ENCODE measurements at regions of chr9 and their contacts with region 1.

Region 1: DNA sequence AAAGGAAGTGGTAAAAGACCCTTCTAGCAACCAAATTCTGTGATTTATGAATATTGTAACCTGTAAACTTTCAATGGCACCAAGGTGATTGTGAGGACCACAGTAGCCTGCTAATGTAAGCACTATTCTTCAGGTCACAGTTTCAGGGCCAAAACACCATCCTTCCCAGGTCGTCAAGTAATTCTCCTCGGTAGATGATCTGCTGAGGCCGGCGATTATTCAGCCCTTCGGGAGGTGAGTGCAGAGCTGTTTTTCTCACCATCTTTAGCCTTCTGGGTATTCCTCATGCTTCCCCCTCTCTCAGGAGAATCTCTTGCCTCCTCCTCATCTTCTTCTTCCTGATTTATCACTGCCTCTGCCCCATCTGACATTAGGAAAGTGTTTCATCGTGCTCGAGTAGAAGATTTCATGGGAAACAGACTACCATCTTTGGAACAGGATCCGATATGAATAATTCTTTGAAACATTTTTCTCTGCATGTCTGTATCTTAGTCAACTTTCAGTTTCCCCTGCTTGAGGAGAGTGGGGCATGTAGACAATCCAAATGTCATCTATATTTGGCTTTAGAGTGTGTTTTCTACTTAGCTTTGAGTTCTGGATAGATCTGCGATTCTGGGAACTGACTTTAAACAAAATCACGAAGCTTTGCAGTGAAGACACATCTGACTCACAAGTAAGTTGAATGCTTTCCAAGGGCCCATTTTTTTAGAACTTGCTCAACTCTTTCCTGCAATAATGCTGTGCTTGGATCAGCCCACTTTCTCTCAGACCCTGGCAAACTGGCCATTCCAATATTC is 173.9 kb downstream of the AOPEP start:
- DNase-seq: peak in 1 of 2 donors; percentile 73
- H3K4me3 ChIP-seq: peak overlapping the region; percentile 28 to 45
- H3K27ac ChIP-seq: peak overlapping the region; percentile 84 to 90
- H3K4me1 ChIP-seq: peaks cover 9 to 44% of the 10 kb centered on the region in 2 donors
- H3K27me3 ChIP-seq: no peaks in the 10 kb centered on the region
- CTCF ChIP-seq: no peak

Region 2: DNA sequence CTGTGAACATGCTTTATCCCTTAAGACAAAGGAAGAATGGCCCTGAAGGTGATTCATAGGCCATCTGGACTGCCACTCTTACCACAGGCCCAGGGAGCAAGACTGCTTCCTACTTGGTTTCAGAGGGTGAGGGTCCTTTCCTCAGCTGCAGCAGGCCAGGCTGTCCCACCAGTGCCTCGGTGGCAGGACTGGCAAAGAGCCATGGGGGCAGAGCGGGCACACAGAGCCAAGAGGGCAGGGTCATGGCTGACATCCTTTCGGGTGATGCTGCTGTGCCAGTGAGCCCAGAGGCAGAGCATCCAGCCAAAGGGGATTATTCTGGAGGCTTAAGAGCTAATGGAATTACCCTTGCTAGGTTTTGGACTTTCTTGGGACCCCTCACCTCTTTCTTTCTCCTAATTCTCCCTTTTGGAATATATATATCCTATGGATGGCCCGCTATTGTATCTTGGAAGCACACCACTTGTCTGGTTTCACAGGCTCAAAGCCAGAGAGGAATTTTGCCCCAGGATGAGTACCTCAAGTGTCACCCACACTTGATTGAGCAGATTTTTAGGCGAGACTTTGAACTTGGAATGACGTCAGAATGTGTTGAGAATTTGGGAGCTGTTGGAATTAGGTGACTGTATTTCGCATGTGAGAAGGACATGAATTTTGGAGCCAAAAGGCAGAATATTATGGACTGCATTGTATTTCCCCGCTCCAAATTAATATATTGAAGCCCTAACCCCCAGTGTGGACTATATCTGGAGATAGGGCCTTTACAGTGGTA is 1125.9 kb before region 1 on chr9:
- intact Hi-C with region 1: no loop called
- DNase-seq: no peak
- H3K4me3 ChIP-seq: no peak overlapping the region
- H3K27ac ChIP-seq: no peak overlapping the region
- H3K4me1 ChIP-seq: no peaks in the 10 kb centered on the region
- H3K27me3 ChIP-seq: no peaks in the 10 kb centered on the region
- CTCF ChIP-seq: no peak

Region 3: DNA sequence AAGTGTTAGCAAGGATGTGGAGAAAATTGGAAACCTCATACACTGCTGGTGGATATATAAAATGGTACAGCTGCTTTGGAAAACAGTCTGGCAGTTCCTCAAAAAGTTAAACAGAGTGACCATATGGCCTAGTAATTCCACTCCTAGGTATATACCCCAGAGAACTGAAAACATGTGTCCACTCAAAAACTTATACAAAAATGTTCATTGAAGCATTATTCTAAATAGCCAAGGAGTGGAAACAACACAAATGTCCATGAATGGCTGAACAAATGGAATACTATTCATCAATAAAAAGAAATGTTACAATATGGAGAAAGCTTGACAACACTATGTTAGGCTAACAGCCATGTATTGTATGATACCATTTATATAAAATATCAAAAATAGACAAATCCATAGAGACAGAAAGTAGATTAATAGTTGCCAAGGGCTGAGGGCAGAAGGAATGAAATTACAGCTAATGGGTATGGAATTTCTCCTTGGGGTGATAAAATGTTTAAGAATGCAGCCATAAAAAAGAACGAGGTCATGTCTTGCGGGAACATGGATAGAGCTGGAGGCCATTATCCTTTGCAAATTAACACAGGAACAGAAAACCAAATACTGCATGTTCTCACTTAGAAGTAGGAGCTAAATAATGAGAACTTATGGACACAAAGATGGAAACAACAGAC is 227.5 kb before region 1 on chr9:
- intact Hi-C with region 1: loop called (anchors 10 kb)
- DNase-seq: no peak
- H3K4me3 ChIP-seq: no peak overlapping the region
- H3K27ac ChIP-seq: peak overlapping the region; percentile 5 to 9
- H3K4me1 ChIP-seq: peaks cover 7 to 17% of the 10 kb centered on the region in 2 donors
- H3K27me3 ChIP-seq: no peaks in the 10 kb centered on the region
- CTCF ChIP-seq: no peak

Region 4: DNA sequence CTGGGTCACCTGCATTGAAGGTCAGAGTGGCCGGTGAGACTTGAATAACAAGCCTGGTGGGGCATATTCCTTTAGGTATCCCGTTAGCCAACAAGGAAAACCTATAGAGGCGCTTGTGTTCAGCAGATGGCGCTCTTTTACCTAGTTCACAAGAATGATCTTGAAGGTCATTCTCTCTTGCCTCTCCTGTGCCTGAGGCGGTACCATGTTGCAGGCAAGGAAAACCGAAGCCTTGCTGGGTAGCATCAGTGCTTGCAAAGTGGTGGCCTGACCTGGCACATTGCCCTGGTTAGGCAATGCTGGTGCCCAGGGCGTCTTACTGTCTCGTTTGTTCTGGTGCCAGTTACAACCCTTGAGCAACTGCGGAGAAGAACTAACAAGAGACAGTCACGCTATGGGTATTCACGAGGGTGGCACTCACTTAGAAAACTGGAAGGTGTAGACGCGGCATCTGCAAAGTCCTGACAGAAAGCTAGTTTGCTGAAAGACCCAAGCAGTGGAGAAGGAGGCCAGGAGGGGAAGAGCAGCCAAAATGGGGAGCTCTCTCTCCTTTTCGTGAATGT is 117.2 kb before region 1 on chr9:
- intact Hi-C with region 1: loop called (anchors 2 kb)
- DNase-seq: peak in 1 of 2 donors; percentile 91
- H3K4me3 ChIP-seq: no peak overlapping the region
- H3K27ac ChIP-seq: peak overlapping the region; percentile 83 to 84
- H3K4me1 ChIP-seq: peaks cover 0 to 34% of the 10 kb centered on the region in 2 donors
- H3K27me3 ChIP-seq: no peaks in the 10 kb centered on the region
- CTCF ChIP-seq: peak; percentile 64 to 69 (median 68)

Region 5: GRCh38 chr9:94805585-94805984 is 94.8 kb before region 1 on chr9:
- intact Hi-C with region 1: loop called (anchors 5 kb)
- DNase-seq: peak in 1 of 2 donors; percentile 71
- H3K4me3 ChIP-seq: no peak overlapping the region
- H3K27ac ChIP-seq: peak overlapping the region; percentile 94 to 96
- H3K4me1 ChIP-seq: peaks cover 35 to 82% of the 10 kb centered on the region in 2 donors
- H3K27me3 ChIP-seq: no peaks in the 10 kb centered on the region
- CTCF ChIP-seq: no peak

Region 6: GRCh38 chr9:94821098-94821887 is 79.1 kb before region 1 on chr9:
- intact Hi-C with region 1: loop called (anchors 5 kb)
- DNase-seq: no peak
- H3K4me3 ChIP-seq: no peak overlapping the region
- H3K27ac ChIP-seq: peak overlapping the region; percentile 82 to 89
- H3K4me1 ChIP-seq: peaks cover 5 to 44% of the 10 kb centered on the region in 2 donors
- H3K27me3 ChIP-seq: no peaks in the 10 kb centered on the region
- CTCF ChIP-seq: no peak

Region 7: GRCh38 chr9:94872921-94873511 is 27.4 kb before region 1 on chr9:
- intact Hi-C with region 1: loop called (anchors 2 kb)
- DNase-seq: no peak
- H3K4me3 ChIP-seq: no peak overlapping the region
- H3K27ac ChIP-seq: peak overlapping the region; percentile 58 to 80
- H3K4me1 ChIP-seq: peaks cover 11 to 56% of the 10 kb centered on the region in 2 donors
- H3K27me3 ChIP-seq: no peaks in the 10 kb centered on the region
- CTCF ChIP-seq: no peak

Region 8: DNA sequence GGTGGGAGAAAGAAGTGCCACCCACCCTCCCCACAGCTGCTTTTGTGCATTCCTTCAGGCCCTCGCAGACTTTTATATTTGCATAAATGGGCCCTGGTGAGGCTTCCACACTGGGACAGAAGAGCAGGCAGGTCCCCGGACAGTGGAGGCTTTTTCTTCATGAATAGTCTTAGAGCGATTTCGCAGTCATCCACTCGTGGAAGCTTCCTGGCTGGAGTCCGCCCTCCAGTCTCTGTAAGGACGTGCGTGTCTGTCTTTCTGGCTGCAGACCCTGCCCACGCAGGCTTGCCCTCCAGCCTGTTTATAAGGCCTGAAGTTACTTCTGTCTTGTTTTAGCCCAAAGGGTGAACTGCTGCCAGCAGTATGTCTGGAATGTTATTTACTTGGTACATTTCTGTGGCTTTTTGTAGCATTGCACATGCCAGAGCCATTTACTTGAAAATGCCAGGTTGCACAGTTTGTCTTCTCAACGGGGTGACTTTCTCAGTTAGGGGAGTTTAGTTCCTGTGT is 21.7 kb after region 1 on chr9:
- intact Hi-C with region 1: loop called (anchors 2 kb)
- DNase-seq: peak in 1 of 2 donors; percentile 93
- H3K4me3 ChIP-seq: peak overlapping the region in 1 of 2 donors; percentile 45
- H3K27ac ChIP-seq: peak overlapping the region; percentile 91 to 97
- H3K4me1 ChIP-seq: peaks cover 9 to 59% of the 10 kb centered on the region in 2 donors
- H3K27me3 ChIP-seq: no peaks in the 10 kb centered on the region
- CTCF ChIP-seq: no peak

Region 9: DNA sequence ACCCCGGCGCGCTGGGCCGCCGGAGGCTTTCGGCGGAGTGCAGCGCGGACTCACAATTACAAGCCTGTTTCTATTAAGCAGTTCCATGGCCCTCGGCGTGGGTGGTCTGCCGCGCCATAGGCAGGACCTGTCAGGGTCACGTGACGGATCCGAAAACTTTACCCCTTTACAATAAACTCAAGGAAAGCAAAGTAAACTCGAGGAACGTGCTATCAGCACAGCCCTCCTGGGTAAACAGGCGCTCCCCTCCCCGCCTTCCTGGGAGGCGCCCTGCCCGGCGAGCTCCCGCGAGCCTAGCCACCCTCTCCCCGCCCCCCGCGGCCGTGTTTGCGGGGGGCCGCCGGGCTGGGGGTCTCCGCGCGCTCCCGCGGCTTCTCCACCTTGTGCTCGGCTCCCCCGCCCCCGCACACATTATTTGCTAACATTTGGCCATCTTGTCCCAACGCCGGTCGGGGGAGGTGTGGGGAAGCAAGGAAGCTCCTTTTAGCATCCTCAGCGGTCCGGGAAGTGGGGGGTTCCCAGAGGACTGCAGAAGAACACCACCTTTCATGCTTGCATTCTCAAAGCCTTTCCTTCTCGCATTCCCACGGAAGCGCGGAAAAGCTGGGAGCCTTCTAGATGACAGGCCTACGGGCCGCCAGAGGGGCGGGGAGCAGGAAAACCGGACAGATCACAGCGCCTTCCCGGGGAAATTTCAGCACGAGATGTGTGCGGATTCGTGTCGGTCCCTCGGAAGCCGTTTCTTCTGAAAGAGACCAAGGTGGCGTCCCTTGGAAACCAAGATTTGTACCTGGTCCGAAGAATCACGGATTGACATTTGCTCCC is 616.5 kb after region 1 on chr9 and contains the start of gene PTCH1:
- intact Hi-C with region 1: no loop called
- DNase-seq: peak in 1 of 2 donors; percentile 70
- H3K4me3 ChIP-seq: peak within 1 kb of the TSS; percentile 67 to 81
- H3K27ac ChIP-seq: peak within 1 kb of the TSS in 1 of 2 donors; percentile 64
- H3K4me1 ChIP-seq: peaks cover 0 to 13% of the 10 kb centered on the region in 2 donors
- H3K27me3 ChIP-seq: no peaks in the 10 kb centered on the region
- CTCF ChIP-seq: no peak
- total RNA-seq, gene PTCH1: 25.2 TPM

Measured in ascending aorta (tissue), 2 donors.